ENCODE measurements at regions of chr5 and their contacts with region 1.

Region 1: GRCh38 chr5:38441453-38442246 is 114.8 kb downstream of the LIFR start:
- H3K4me3 ChIP-seq: no peak overlapping the region
- H3K27ac ChIP-seq: no peak overlapping the region
- H3K4me1 ChIP-seq: no peaks in the 10 kb centered on the region
- CTCF ChIP-seq: peak; percentile 97

Region 2: GRCh38 chr5:38347040-38347763 is 94.4 kb before region 1 on chr5:
- CTCF ChIA-PET with region 1: no interaction called
- POLR2A ChIA-PET with region 1: no interaction called
- H3K4me3 ChIP-seq: no peak overlapping the region
- H3K27ac ChIP-seq: no peak overlapping the region
- H3K4me1 ChIP-seq: no peaks in the 10 kb centered on the region
- CTCF ChIP-seq: no peak

Region 3: DNA sequence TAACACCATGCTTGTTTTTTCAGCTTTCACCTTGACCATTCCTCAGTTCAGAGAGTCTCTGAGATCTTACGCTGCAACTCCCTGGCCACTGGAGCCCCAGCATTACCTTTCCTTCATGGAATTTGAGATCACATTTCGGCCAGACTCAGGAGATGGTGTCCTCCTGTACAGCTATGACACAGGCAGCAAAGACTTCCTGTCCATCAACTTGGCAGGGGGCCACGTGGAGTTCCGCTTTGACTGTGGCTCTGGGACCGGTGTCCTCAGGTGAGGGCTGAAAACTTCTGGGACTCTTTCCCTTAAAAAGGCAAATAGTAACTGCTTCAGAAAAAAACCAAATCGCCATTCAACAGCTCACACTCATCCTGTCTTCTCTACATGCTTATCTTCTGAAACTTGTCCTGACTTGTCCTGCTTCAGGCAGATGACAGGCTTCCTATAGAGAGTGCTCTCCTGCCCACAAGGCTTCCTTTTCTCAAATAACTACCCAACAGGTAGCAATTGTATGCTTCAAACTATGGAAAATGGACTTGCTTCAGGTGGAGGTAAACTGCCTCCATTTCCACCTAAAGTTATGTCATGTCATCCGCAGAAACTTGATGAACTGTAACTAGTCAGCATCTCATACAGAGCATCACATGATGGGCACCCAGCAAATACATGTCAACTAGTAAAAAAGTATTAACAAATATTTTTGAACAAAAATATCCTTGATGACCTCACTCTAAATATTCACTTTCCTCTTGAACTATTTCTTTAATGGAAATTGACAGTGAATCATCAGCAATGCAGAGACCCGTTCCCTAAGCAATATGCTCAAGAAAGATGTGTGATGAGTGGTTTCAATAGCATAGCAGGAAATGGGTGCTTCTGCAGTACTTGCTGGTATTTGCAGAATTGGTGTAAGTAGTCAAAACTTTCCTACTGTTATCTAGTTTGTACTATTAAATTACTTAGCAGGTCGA is 14.4 kb before region 1 on chr5:
- CTCF ChIA-PET with region 1: interaction called, 90 read pairs
- POLR2A ChIA-PET with region 1: interaction called, 3 read pairs
- H3K4me3 ChIP-seq: no peak overlapping the region
- H3K27ac ChIP-seq: peak overlapping the region; percentile 29; the same call in 1 of the 2 replicates
- H3K4me1 ChIP-seq: peaks cover 15% of the 10 kb centered on the region; the same call in 1 of the 2 replicates
- CTCF ChIP-seq: no peak

Region 4: DNA sequence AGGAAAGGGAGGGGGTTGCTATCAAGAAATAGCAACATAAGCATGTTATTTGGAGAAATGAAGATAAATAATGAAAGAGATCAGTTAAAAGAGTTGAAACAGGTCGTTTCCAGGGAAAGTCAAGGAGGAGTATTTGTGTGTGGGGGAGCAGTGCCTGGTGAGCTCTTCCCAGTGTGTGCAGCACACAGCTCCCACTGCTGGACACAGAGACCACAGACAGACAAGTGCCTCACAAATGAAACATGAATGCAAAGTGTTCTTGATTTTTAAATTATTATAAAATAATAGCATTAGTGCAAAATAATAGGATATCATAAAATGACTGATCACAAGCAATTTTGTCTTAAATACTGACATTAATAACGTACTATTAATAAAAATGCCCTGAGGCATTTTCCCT is 74.0 kb after region 1 on chr5:
- CTCF ChIA-PET with region 1: interaction called, 10 read pairs
- POLR2A ChIA-PET with region 1: no interaction called
- H3K4me3 ChIP-seq: no peak overlapping the region
- H3K27ac ChIP-seq: no peak overlapping the region
- H3K4me1 ChIP-seq: peaks cover 13% of the 10 kb centered on the region
- CTCF ChIP-seq: peak; percentile 72

Region 5: GRCh38 chr5:38607396-38607795 is 165.7 kb after region 1 on chr5:
- CTCF ChIA-PET with region 1: interaction called, 13 read pairs
- POLR2A ChIA-PET with region 1: no interaction called
- H3K4me3 ChIP-seq: no peak overlapping the region
- H3K27ac ChIP-seq: no peak overlapping the region
- H3K4me1 ChIP-seq: peaks cover 20% of the 10 kb centered on the region
- CTCF ChIP-seq: no peak

Region 6: GRCh38 chr5:38751103-38751502 is 309.5 kb after region 1 on chr5:
- CTCF ChIA-PET with region 1: interaction called, 23 read pairs
- POLR2A ChIA-PET with region 1: no interaction called
- H3K4me3 ChIP-seq: no peak overlapping the region
- H3K27ac ChIP-seq: no peak overlapping the region
- H3K4me1 ChIP-seq: no peaks in the 10 kb centered on the region
- CTCF ChIP-seq: no peak

Region 7: GRCh38 chr5:39080597-39081204 is 639.1 kb after region 1 on chr5:
- CTCF ChIA-PET with region 1: interaction called, 11 read pairs
- POLR2A ChIA-PET with region 1: no interaction called
- H3K4me3 ChIP-seq: no peak overlapping the region
- H3K27ac ChIP-seq: no peak overlapping the region
- H3K4me1 ChIP-seq: peaks cover 8% of the 10 kb centered on the region; the same call in 1 of the 2 replicates
- CTCF ChIP-seq: peak; percentile 52